ENCODE measurements at regions of chr6 and their contacts with region 1.

Region 1: GRCh38 chr6:2634139-2634964 is 116.4 kb downstream of the MYLK4 start:
- DNase-seq: peak; percentile 87
- CTCF ChIP-seq: peak; percentile 89

Region 2: DNA sequence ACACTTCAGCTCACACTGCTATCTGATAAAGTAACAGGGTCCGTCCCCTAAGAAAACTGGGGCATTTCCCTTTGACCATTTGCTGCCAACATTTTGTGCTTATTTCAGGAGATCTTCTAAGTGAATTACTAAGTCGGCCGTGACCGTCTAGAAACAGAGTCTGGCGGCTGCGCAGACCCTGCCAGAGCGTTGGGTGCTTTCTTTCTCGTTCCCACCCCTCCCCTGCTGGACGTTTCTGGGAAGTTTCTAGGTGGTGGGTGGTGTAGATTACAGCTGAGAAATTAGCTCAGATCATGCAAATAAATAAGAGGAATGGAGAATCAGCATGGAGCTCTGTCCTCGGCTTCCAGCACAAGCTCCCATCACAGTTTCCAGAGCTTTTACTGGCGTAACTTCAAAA is 11.7 kb before region 1 on chr6:
- CTCF ChIA-PET with region 1: interaction called, 37 read pairs
- POLR2A ChIA-PET with region 1: no interaction called
- DNase-seq: no peak
- CTCF ChIP-seq: no peak

Region 3: GRCh38 chr6:2646346-2646745 is 12.0 kb after region 1 on chr6:
- CTCF ChIA-PET with region 1: interaction called, 42 read pairs
- POLR2A ChIA-PET with region 1: no interaction called
- DNase-seq: no peak
- CTCF ChIP-seq: no peak

Region 4: DNA sequence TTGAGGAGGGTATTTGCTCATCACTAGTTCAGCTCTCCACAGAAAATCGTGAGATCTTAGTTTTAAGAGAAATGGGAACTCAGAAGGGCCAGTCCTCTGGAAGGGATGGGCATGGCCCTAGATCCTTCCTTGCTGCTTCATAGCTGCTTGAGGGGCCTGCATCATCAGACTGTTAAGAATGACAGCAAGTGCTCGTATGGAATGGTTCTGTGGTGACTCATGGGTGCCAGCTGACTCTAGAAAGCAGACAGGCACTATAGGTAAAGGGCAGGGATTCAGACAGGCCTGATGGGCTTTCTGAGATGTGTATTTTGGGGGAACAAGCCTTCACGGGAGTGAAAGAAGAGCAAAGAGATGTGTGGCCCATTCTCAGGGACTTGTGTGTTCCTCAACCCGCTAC is 25.5 kb after region 1 on chr6:
- CTCF ChIA-PET with region 1: interaction called, 10 read pairs
- POLR2A ChIA-PET with region 1: no interaction called
- DNase-seq: no peak
- CTCF ChIP-seq: no peak

Region 5: GRCh38 chr6:2665146-2666070 is 31.1 kb after region 1 on chr6:
- CTCF ChIA-PET with region 1: interaction called, 14 read pairs
- POLR2A ChIA-PET with region 1: no interaction called
- DNase-seq: no peak
- CTCF ChIP-seq: no peak

Region 6: DNA sequence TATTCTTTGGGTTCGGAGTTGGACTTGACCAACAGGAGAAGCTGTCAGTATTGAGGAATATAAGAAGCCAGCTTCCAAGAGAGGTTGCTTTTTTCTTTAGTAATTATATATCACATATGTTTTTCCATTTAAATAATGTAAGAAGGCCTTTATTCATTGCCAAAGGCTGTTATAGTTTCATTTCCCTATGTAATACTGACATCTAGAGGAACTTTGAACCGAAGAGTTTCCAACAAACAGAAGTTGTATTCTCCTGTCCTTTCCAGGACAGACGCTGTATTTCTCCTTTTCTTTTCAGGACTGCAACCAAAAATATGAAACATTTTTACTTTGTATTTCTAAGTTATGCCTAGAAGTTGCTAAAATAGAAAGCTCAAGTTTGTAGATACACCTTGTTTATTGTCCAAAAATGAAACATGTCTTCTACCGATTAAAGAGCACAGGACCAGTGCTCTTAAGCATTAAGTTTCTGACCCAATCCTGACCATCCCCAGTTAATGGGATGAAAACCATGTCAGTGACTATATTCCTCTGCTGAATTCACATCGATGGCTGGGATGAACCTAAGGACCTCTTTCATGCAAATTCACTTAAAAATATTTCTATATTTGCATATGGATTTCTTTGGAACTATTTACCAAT is 61.2 kb after region 1 on chr6:
- CTCF ChIA-PET with region 1: interaction called, 10 read pairs
- POLR2A ChIA-PET with region 1: no interaction called
- DNase-seq: peak; percentile 36
- CTCF ChIP-seq: peak; percentile 37

Measured in GM10248 (cell line).